HepG2 (cell line): ENCODE measurements at regions of chr5 and their contacts with region 1.

Region 1: DNA sequence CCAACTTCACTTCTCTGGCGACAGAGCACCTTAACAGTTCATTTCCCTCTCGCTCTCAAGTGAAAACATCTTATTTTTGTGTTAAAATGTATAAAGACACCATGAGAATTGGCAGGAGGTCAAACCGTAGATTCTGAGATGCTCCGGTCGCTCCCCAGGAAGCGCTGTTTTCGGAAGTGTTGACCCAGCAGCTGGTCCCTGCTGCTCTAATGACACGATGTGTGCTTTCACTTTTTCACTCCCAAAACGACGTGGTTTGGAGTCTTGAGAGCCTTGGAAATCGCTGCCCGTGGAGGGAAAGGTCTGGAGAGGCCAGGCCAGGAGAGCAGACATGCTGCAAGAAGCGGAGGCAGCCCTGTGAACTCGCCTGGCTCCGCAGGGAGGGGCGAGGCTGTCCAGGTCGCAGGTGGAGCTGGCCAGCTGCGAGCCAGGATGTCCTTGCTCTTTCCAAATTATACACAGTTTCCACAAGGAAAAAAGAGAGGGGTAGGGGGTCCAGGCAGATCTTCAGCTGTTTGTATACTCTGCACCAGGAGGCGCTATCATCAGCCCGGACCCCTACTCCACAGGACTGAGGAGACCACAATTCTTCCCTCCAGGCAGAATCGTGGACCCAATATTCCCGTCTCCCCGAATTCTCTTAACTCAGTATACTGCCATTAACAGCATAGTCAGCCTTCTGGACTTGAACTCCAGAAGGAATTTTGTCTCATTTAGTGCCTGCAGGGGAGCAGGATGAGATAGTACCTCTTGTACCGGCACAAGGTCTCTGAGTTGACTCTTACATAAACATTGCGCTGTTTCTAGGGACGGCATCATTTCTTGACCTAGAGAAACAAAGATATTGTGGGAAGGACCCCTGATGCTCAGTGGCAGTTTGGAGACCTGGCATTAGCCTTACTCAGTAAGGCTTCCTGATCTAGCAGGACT is 248.6 kb upstream of the ANKRD55 start:
- DNase-seq: peak; percentile 35
- ATAC-seq: peak; percentile 42
- H3K4me3 ChIP-seq: peak overlapping the region; percentile 53 to 73 (median 61)
- H3K27ac ChIP-seq: peak overlapping the region; percentile 96
- H3K4me1 ChIP-seq: peaks cover 63% of the 10 kb centered on the region
- H3K27me3 ChIP-seq: no peaks in the 10 kb centered on the region
- CTCF ChIP-seq: peak; percentile 58
- EP300 ChIP-seq: 0 out of 4 replicates have a peak, but pooled peaks of 1 of the 2 experiments have one; percentile 9
- POLR2A ChIP-seq: no peak
- RAD21 ChIP-seq: no peak

Region 2: GRCh38 chr5:56259002-56259511 is 222.6 kb before region 1 on chr5:
- CTCF ChIA-PET with region 1: no interaction called
- POLR2A ChIA-PET with region 1: no interaction called
- in situ Hi-C with region 1: no loop called
- intact Hi-C with region 1: no loop called
- DNase-seq: peak; percentile 63
- ATAC-seq: peak; percentile 66; the same call in 1 of the 3 replicates
- H3K4me3 ChIP-seq: no peak overlapping the region
- H3K27ac ChIP-seq: no peak overlapping the region
- H3K4me1 ChIP-seq: peaks cover 18% of the 10 kb centered on the region
- H3K27me3 ChIP-seq: peaks cover 0 to under 1% of the 10 kb centered on the region in 2 experiments; a peak in 1 of 5 replicates
- CTCF ChIP-seq: no peak
- EP300 ChIP-seq: no peak
- POLR2A ChIP-seq: no peak
- RAD21 ChIP-seq: no peak

Region 3: DNA sequence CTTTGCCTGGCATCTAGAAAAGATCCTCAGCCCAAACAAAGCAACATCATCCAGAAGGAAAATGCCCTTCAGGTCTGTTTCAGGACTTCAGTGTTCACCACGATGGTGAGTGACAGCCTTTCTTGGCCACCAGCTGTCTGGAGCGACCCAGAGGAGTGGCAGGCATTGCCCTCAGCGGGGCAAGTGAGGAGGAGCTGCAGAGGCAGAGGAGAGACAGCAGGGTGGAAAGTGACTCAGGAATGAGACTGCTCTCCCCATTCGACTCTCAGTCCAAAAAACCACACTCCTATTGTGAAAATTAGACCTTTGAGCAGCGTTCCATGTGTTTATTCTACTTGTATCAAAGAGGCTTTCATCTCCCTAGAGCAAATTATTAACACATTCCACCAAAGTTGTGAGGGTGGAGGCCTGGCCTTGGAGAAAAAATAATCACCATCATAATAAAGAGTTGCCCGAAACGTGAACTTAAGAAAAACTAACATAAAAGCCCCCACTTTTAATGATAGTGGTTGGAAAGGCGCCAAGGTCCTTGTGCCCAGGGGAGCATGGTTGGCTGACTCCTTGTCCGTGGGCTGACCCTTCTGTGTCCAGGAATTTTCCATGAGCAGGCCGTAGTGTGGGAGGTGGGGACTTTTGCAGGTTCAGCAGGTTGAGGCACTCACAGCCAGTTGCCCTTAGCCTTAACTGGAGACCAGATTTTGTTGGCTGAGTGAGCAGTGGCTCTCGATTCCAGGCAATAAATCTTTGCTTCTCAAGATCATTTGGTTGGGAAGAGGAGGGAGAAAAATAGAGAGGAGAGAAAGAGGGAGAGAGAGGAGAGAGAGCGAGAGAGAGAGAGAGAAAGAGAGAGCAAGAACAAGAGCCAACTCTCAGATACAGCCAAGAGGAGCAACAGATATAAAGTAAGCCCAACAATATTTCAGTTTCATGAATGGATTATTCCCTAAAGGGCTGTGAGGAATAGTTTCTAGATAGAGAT is 122.7 kb before region 1 on chr5:
- CTCF ChIA-PET with region 1: no interaction called
- POLR2A ChIA-PET with region 1: interaction called, 18 read pairs
- in situ Hi-C with region 1: loop called (anchors 10 kb)
- intact Hi-C with region 1: loop called (anchors 1 kb)
- DNase-seq: peak; percentile 100
- ATAC-seq: peak; percentile 99
- H3K4me3 ChIP-seq: peak overlapping the region; percentile 28 to 53 (median 35)
- H3K27ac ChIP-seq: peak overlapping the region; percentile 100
- H3K4me1 ChIP-seq: peaks cover 63% of the 10 kb centered on the region
- H3K27me3 ChIP-seq: no peaks in the 10 kb centered on the region
- CTCF ChIP-seq: peak; percentile 35; the same call in 1 of the 2 replicates
- EP300 ChIP-seq: peak; percentile 95 to 97; a peak in 3 of 4 replicates
- POLR2A ChIP-seq: peak; percentile 71 to 78
- RAD21 ChIP-seq: peak; percentile 68

Region 4: DNA sequence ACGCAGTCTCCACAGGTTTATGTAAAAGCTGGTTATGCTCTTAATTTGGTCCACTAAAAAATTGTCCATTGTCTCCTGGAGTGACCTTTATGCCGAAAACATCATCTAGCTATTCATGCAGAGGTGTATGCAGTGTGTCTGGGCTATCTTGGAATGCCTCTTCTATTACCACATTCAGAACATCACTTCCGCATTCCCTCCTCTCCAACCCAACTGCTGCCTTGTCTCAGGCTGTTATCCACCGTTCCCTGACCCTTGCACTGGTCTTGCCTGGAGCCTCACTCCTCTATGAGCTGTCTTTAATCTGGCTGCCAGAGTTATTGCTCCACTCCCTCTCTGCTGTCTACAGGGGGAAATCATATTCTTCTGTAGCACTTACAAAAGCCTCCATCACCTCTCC is 34.5 kb before region 1 on chr5:
- CTCF ChIA-PET with region 1: no interaction called
- POLR2A ChIA-PET with region 1: interaction called, 19 read pairs
- in situ Hi-C with region 1: no loop called
- intact Hi-C with region 1: no loop called
- DNase-seq: peak; percentile 93
- ATAC-seq: peak; percentile 99
- H3K4me3 ChIP-seq: peak overlapping the region in 1 of 3 experiments; percentile 14; a peak in 1 of 6 replicates
- H3K27ac ChIP-seq: peak overlapping the region; percentile 58
- H3K4me1 ChIP-seq: peaks cover 44% of the 10 kb centered on the region
- H3K27me3 ChIP-seq: no peaks in the 10 kb centered on the region
- CTCF ChIP-seq: no peak
- EP300 ChIP-seq: peak in 1 of 2 experiments; percentile 79; a peak in 2 of 4 replicates
- POLR2A ChIP-seq: no peak
- RAD21 ChIP-seq: peak; percentile 40; the same call in 1 of the 2 replicates

Region 5: GRCh38 chr5:56496581-56497063 is 14.9 kb after region 1 on chr5:
- CTCF ChIA-PET with region 1: no interaction called
- POLR2A ChIA-PET with region 1: no interaction called
- in situ Hi-C with region 1: no loop called
- intact Hi-C with region 1: no loop called
- DNase-seq: no peak
- ATAC-seq: no peak
- H3K4me3 ChIP-seq: no peak overlapping the region
- H3K27ac ChIP-seq: no peak overlapping the region
- H3K4me1 ChIP-seq: peaks cover 18% of the 10 kb centered on the region
- H3K27me3 ChIP-seq: no peaks in the 10 kb centered on the region
- CTCF ChIP-seq: no peak
- EP300 ChIP-seq: no peak
- POLR2A ChIP-seq: no peak
- RAD21 ChIP-seq: no peak

Region 6: GRCh38 chr5:56512313-56512996 is 30.8 kb after region 1 on chr5:
- CTCF ChIA-PET with region 1: no interaction called
- POLR2A ChIA-PET with region 1: interaction called, 13 read pairs
- in situ Hi-C with region 1: no loop called
- intact Hi-C with region 1: no loop called
- DNase-seq: no peak
- ATAC-seq: peak; percentile 21; the same call in 2 of the 3 replicates
- H3K4me3 ChIP-seq: no peak overlapping the region
- H3K27ac ChIP-seq: no peak overlapping the region
- H3K4me1 ChIP-seq: peaks cover 57% of the 10 kb centered on the region
- H3K27me3 ChIP-seq: 0 out of 5 replicates have a peak, but pooled peaks cover 0 to 2% of the 10 kb centered on the region in 2 experiments
- CTCF ChIP-seq: no peak
- EP300 ChIP-seq: no peak
- POLR2A ChIP-seq: no peak
- RAD21 ChIP-seq: no peak

Region 7: DNA sequence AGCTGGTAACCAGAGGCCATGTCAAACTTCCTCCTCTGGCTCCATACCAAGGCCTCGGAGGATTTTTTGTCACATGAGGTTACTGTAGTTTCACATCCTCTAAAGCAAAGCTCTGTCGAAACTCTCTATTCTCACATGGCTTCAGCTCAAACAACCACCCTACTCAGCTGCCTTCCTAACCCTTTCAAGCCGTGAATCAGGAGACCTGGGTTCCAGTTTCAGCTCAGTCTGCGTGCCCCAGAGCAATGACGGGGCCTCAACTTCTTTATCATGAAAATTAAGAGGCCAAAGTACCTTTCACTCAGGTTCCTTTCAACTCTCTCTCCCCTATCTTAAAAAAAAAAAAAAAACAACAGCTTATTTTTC is 188.4 kb after region 1 on chr5:
- CTCF ChIA-PET with region 1: no interaction called
- POLR2A ChIA-PET with region 1: no interaction called
- in situ Hi-C with region 1: no loop called
- intact Hi-C with region 1: loop called (anchors 10 kb)
- DNase-seq: peak; percentile 48
- ATAC-seq: peak; percentile 75
- H3K4me3 ChIP-seq: peak overlapping the region in 1 of 3 experiments; percentile 30; a peak in 2 of 6 replicates
- H3K27ac ChIP-seq: no peak overlapping the region
- H3K4me1 ChIP-seq: peaks cover 28% of the 10 kb centered on the region
- H3K27me3 ChIP-seq: no peaks in the 10 kb centered on the region
- CTCF ChIP-seq: no peak
- EP300 ChIP-seq: no peak
- POLR2A ChIP-seq: no peak
- RAD21 ChIP-seq: no peak

Region 8: GRCh38 chr5:56838409-56839039 is 356.8 kb after region 1 on chr5:
- CTCF ChIA-PET with region 1: interaction called, 3 read pairs
- POLR2A ChIA-PET with region 1: interaction called, 7 read pairs
- in situ Hi-C with region 1: loop called (anchors 25 kb)
- intact Hi-C with region 1: loop called (anchors 5 kb)
- DNase-seq: peak; percentile 33
- ATAC-seq: no peak
- H3K4me3 ChIP-seq: no peak overlapping the region
- H3K27ac ChIP-seq: no peak overlapping the region
- H3K4me1 ChIP-seq: peaks cover 53% of the 10 kb centered on the region
- H3K27me3 ChIP-seq: no peaks in the 10 kb centered on the region
- CTCF ChIP-seq: peak; percentile 66
- EP300 ChIP-seq: no peak
- POLR2A ChIP-seq: no peak
- RAD21 ChIP-seq: peak; percentile 56